ENCODE measurements at regions of chr14 and their contacts with region 1.

Region 1: GRCh38 chr14:29927376-29928116 is at the start of gene PRKD1:
- DNase-seq: peak; percentile 62
- ATAC-seq: peak; percentile 77
- H3K4me3 ChIP-seq: peak within 1 kb of the TSS; percentile 75
- H3K27ac ChIP-seq: peak within 1 kb of the TSS; percentile 63
- H3K4me1 ChIP-seq: peaks cover 5% of the 10 kb centered on the region
- H3K27me3 ChIP-seq: no peaks in the 10 kb centered on the region
- CTCF ChIP-seq: 0 out of 2 replicates have a peak, but pooled peaks have one; percentile 7
- POLR2A ChIP-seq: no peak
- RAD21 ChIP-seq: no peak
- total RNA-seq, gene PRKD1: 12.8 and 12.9 TPM in 2 replicates

Region 2: GRCh38 chr14:29548948-29549370 is 378.6 kb before region 1 on chr14:
- CTCF ChIA-PET with region 1: no interaction called
- POLR2A ChIA-PET with region 1: no interaction called
- dilution Hi-C with region 1: no loop called
- in situ Hi-C with region 1: no loop called
- intact Hi-C with region 1: loop called (anchors 1 kb)
- DNase-seq: peak; percentile 77
- ATAC-seq: peak; percentile 89
- H3K4me3 ChIP-seq: no peak overlapping the region
- H3K27ac ChIP-seq: no peak overlapping the region
- H3K4me1 ChIP-seq: no peaks in the 10 kb centered on the region
- H3K27me3 ChIP-seq: 0 out of 2 replicates have a peak, but pooled peaks cover 2% of the 10 kb centered on the region
- CTCF ChIP-seq: peak; percentile 67
- POLR2A ChIP-seq: no peak
- RAD21 ChIP-seq: peak; percentile 73

Region 3: GRCh38 chr14:29637411-29637810 is 290.1 kb before region 1 on chr14:
- CTCF ChIA-PET with region 1: no interaction called
- POLR2A ChIA-PET with region 1: no interaction called
- dilution Hi-C with region 1: no loop called
- in situ Hi-C with region 1: no loop called
- intact Hi-C with region 1: loop called (anchors 5 kb)
- DNase-seq: peak; percentile 64
- ATAC-seq: peak; percentile 68
- H3K4me3 ChIP-seq: no peak overlapping the region
- H3K27ac ChIP-seq: no peak overlapping the region
- H3K4me1 ChIP-seq: no peaks in the 10 kb centered on the region
- H3K27me3 ChIP-seq: no peaks in the 10 kb centered on the region
- CTCF ChIP-seq: no peak
- POLR2A ChIP-seq: no peak
- RAD21 ChIP-seq: no peak

Region 4: GRCh38 chr14:29716150-29716549 is 211.4 kb before region 1 on chr14:
- CTCF ChIA-PET with region 1: no interaction called
- POLR2A ChIA-PET with region 1: no interaction called
- dilution Hi-C with region 1: no loop called
- in situ Hi-C with region 1: no loop called
- intact Hi-C with region 1: loop called (anchors 5 kb)
- DNase-seq: peak; percentile 54
- ATAC-seq: peak; percentile 40
- H3K4me3 ChIP-seq: no peak overlapping the region
- H3K27ac ChIP-seq: no peak overlapping the region
- H3K4me1 ChIP-seq: peaks cover 3% of the 10 kb centered on the region; the same call in 1 of the 2 replicates
- H3K27me3 ChIP-seq: no peaks in the 10 kb centered on the region
- CTCF ChIP-seq: no peak
- POLR2A ChIP-seq: no peak
- RAD21 ChIP-seq: no peak

Region 5: GRCh38 chr14:29821661-29822654 is 105.6 kb before region 1 on chr14:
- CTCF ChIA-PET with region 1: no interaction called
- POLR2A ChIA-PET with region 1: no interaction called
- dilution Hi-C with region 1: no loop called
- in situ Hi-C with region 1: no loop called
- intact Hi-C with region 1: loop called (anchors 5 kb)
- DNase-seq: peak; percentile 7
- ATAC-seq: peak; percentile 54
- H3K4me3 ChIP-seq: no peak overlapping the region
- H3K27ac ChIP-seq: no peak overlapping the region
- H3K4me1 ChIP-seq: peaks cover 6% of the 10 kb centered on the region; the same call in 1 of the 2 replicates
- H3K27me3 ChIP-seq: no peaks in the 10 kb centered on the region
- CTCF ChIP-seq: no peak
- POLR2A ChIP-seq: no peak
- RAD21 ChIP-seq: no peak

Region 6: DNA sequence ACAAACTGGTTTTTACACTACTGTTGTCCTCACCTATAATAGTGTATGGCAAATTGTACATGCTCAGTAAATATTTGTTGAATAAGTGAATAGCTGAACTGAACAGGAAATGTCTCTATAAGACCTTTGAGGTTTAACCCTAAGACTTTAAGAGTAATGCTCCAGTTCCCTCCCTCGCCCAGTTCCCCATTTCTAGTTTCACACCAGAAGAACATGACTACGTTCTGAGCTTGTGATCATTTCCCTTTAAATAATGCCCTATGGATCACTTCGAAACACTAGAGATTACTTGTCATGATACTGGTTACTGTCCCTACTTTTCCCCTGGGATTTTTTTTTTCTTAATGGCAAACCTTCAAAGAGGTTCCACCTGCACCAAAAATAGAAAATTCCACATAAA is 69.2 kb before region 1 on chr14:
- CTCF ChIA-PET with region 1: no interaction called
- POLR2A ChIA-PET with region 1: no interaction called
- dilution Hi-C with region 1: no loop called
- in situ Hi-C with region 1: no loop called
- intact Hi-C with region 1: no loop called
- DNase-seq: no peak
- ATAC-seq: no peak
- H3K4me3 ChIP-seq: no peak overlapping the region
- H3K27ac ChIP-seq: no peak overlapping the region
- H3K4me1 ChIP-seq: no peaks in the 10 kb centered on the region; the same call in 1 of the 2 replicates
- H3K27me3 ChIP-seq: no peaks in the 10 kb centered on the region
- CTCF ChIP-seq: no peak
- POLR2A ChIP-seq: no peak
- RAD21 ChIP-seq: no peak

Region 7: GRCh38 chr14:30005114-30005808 is 77.7 kb after region 1 on chr14:
- CTCF ChIA-PET with region 1: no interaction called
- POLR2A ChIA-PET with region 1: no interaction called
- dilution Hi-C with region 1: no loop called
- in situ Hi-C with region 1: no loop called
- intact Hi-C with region 1: loop called (anchors 5 kb)
- DNase-seq: peak; percentile 89
- ATAC-seq: peak; percentile 98
- H3K4me3 ChIP-seq: no peak overlapping the region
- H3K27ac ChIP-seq: no peak overlapping the region
- H3K4me1 ChIP-seq: no peaks in the 10 kb centered on the region
- H3K27me3 ChIP-seq: no peaks in the 10 kb centered on the region
- CTCF ChIP-seq: peak; percentile 87
- POLR2A ChIP-seq: no peak
- RAD21 ChIP-seq: peak; percentile 91

Region 8: DNA sequence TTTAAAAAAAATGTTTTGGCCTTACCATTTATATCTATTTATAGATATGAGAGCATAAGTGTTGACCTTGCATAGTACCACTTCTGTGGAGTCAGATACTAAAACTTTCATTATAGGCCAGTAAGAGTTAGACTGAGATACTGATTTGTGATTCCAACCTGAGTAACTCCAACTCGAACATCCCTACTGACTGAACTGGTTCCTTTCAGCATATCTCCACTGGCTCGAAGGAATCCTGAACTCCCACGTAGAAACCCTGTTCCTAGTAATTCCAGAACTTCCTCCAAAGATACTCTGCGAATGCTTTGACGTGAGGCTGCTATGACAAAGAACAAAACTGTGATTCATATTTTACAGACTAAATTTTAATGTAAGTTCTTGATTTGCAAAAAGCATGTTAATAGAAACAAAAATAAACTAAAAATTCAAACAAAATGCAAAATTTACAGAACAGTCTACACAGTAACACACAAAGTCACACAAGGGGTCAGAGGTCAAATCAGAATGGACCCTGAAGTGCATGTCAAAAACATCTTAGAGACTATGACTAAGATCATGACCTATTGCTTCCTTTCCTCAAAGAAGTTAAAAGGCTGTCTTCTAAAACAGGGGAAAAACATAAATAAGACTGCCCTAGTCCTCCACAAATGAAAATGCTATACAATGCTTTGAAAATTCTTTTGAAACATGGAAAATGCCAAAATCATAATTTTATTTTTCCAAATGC is 1461.3 kb after region 1 on chr14:
- CTCF ChIA-PET with region 1: no interaction called
- POLR2A ChIA-PET with region 1: interaction called, 11 read pairs
- dilution Hi-C with region 1: no loop called
- in situ Hi-C with region 1: no loop called
- intact Hi-C with region 1: no loop called
- DNase-seq: peak; percentile 41
- ATAC-seq: no peak
- H3K4me3 ChIP-seq: no peak overlapping the region
- H3K27ac ChIP-seq: no peak overlapping the region
- H3K4me1 ChIP-seq: 0 out of 2 replicates have a peak, but pooled peaks cover 2% of the 10 kb centered on the region
- H3K27me3 ChIP-seq: no peaks in the 10 kb centered on the region
- CTCF ChIP-seq: no peak
- POLR2A ChIP-seq: no peak
- RAD21 ChIP-seq: no peak

Measured in IMR-90 (cell line).